ENCODE measurements at regions of chr2 and their contacts with region 1.

Region 1: DNA sequence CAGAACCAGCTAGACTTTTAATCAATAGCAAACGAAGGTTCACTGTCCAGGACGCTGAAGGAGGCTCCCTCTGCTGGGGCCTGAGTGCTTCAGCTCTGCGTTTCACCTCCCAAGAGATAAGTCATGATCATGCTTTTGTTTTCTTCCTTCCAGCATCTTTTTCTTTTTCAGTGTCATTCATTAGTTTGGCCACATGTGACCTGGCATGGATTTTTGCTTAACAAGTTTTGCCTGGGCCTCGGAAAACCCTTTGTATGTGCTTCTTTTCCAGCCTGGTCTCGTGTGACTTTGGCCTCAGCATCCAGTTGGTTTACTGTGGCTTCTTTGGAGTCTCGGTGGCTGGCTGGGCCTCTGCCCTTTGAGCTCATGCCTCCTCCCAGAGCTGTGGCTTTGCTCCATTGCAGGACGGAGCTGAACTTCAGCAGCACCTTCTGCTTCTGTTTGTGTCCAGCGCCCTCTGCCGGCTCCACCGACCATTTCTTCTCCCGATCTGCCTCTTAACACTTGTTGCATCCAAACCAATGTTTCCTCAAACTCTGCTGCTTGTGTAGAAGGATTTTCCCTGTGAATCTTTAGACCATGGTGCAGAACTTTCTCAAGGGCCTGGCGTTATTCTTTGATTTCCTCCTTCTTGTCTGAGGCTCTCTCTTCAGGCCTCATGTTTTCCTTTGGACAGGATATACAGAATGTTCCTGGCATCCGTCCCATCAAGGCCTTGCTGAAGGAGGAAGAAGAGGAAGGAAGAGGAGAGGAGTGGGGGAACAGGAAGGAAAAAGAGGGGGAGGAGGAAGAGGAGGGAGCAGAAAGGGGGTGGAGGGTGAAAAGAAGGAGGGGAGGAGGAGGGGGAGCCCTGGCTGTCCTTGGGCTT is 23.6 kb upstream of the HES6 start:
- DNase-seq: peak; percentile 88
- H3K4me3 ChIP-seq: no peak overlapping the region
- H3K27ac ChIP-seq: no peak overlapping the region
- H3K27me3 ChIP-seq: no peaks in the 10 kb centered on the region
- CTCF ChIP-seq: peak; percentile 83

Region 2: DNA sequence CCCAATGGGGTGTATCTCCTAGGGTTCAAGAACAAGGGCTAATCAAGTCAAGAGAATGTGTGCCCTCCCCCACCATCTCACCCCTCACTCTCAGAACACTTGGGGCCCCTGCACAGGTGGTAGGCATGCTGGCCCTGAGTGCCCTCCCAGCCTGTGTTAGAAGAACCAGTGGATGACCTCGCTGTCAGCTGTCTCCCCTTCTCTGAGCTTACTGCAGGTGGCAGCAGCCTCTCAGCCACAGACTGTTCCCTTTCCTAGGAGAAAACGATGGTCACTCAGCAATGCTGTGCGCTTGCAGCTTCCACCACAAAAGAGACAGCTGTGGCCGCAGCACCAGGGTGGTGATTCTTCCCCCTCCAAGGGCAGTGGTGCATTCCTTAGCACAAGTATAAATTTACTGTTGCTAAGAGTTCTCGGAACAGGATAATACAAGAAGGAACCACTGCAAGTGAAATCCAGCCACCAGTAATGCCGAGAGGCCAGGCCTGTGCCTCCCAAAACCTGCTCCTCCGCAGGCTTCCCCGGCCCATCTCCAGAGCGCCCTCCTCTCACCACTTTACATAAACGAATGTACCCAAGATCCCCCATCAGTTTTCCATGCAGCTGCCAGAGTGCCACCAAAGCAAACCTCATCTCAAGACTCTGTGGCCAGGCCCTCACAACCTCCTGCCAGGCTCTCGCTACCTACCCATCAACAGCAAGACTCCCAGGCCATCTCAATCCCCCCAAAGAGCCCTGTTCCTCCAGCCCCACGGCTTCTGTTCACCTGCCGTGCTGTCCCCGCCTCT is 404.9 kb before region 1 on chr2:
- CTCF ChIA-PET with region 1: interaction called, 50 read pairs
- POLR2A ChIA-PET with region 1: interaction called, 3 read pairs
- DNase-seq: peak; percentile 78
- H3K4me3 ChIP-seq: peak overlapping the region; percentile 43; the same call in 1 of the 2 replicates
- H3K27ac ChIP-seq: no peak overlapping the region
- H3K27me3 ChIP-seq: peaks cover 4% of the 10 kb centered on the region
- CTCF ChIP-seq: peak; percentile 95

Region 3: GRCh38 chr2:238277695-238278094 is 14.3 kb after region 1 on chr2:
- CTCF ChIA-PET with region 1: interaction called, 16 read pairs
- POLR2A ChIA-PET with region 1: no interaction called
- DNase-seq: no peak
- H3K4me3 ChIP-seq: no peak overlapping the region
- H3K27ac ChIP-seq: no peak overlapping the region
- H3K27me3 ChIP-seq: no peaks in the 10 kb centered on the region
- CTCF ChIP-seq: no peak

Region 4: GRCh38 chr2:238285653-238286089 is 22.2 kb after region 1 on chr2:
- CTCF ChIA-PET with region 1: interaction called, 13 read pairs
- POLR2A ChIA-PET with region 1: no interaction called
- DNase-seq: peak; percentile 85
- H3K4me3 ChIP-seq: peak overlapping the region; percentile 34
- H3K27ac ChIP-seq: peak overlapping the region; percentile 93
- H3K27me3 ChIP-seq: no peaks in the 10 kb centered on the region
- CTCF ChIP-seq: no peak